ENCODE measurements at regions of chr1 and their contacts with region 1.

Region 1: DNA sequence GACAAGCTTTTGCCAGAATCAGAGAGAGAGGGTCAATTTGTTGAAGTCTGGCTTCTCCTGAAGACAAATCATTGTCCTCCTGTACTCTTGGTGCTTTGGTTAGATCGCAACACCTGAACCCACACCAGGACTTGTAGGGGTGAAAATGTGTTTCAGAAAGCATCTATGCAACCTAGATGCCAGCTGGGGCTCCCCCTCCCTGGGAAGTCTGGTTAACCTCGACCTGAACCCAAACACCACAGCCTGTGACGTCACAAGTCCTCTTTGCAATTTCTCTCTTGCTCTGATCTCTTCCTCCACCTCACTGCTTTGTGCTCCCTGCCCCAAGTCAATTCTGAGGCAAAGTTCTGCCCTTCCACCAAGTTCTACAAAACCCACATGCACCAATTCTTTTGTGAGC is 42.8 kb upstream of the USP24 start:
- DNase-seq: peak; percentile 47
- CTCF ChIP-seq: no peak

Region 2: GRCh38 chr1:55244476-55245099 is 13.4 kb before region 1 on chr1:
- CTCF ChIA-PET with region 1: interaction called, 18 read pairs
- POLR2A ChIA-PET with region 1: no interaction called
- DNase-seq: no peak
- CTCF ChIP-seq: no peak

Region 3: GRCh38 chr1:55916481-55916880 is 658.5 kb after region 1 on chr1:
- CTCF ChIA-PET with region 1: no interaction called
- POLR2A ChIA-PET with region 1: no interaction called
- DNase-seq: no peak
- CTCF ChIP-seq: no peak